Breast epithelium (tissue), 4 donors: ENCODE measurements at regions of chr7 and their contacts with region 1.

Region 1: DNA sequence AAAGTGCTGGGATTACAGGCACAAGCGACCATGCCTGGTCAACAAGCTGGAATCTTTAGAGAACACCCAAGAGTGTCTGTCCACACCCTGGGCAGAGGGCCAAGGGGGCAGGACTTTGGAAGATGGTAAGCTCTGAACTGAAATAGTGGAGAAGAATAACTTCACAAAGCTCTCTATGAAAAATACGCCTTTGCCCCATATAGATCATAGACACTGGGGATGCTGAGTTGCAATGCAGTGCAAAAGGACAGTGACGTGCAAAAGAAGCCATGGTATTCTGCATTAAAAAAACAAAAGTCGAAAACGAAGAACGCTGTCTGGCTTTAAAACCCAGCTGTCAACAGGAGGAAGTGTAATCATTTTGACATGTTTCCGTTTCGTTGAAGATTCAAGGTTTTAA is 353.6 kb downstream of the CALN1 start:
- DNase-seq: no peak
- H3K4me3 ChIP-seq: no peak overlapping the region
- H3K27ac ChIP-seq: no peak overlapping the region
- H3K4me1 ChIP-seq: no peaks in the 10 kb centered on the region
- H3K27me3 ChIP-seq: no peaks in the 10 kb centered on the region
- CTCF ChIP-seq: no peak
- POLR2A ChIP-seq: no peak

Region 2: GRCh38 chr7:72017756-72018155 is 40.8 kb before region 1 on chr7:
- intact Hi-C with region 1: no loop called
- DNase-seq: no peak
- H3K4me3 ChIP-seq: no peak overlapping the region
- H3K27ac ChIP-seq: no peak overlapping the region
- H3K4me1 ChIP-seq: no peaks in the 10 kb centered on the region
- H3K27me3 ChIP-seq: no peaks in the 10 kb centered on the region
- CTCF ChIP-seq: no peak
- POLR2A ChIP-seq: no peak

Region 3: GRCh38 chr7:72080341-72080766 is 21.8 kb after region 1 on chr7:
- intact Hi-C with region 1: loop called (anchors 1 kb)
- DNase-seq: no peak
- H3K4me3 ChIP-seq: no peak overlapping the region
- H3K27ac ChIP-seq: peak overlapping the region in 1 of 2 donors; percentile 25
- H3K4me1 ChIP-seq: no peaks in the 10 kb centered on the region
- H3K27me3 ChIP-seq: no peaks in the 10 kb centered on the region
- CTCF ChIP-seq: no peak
- POLR2A ChIP-seq: no peak

Region 4: DNA sequence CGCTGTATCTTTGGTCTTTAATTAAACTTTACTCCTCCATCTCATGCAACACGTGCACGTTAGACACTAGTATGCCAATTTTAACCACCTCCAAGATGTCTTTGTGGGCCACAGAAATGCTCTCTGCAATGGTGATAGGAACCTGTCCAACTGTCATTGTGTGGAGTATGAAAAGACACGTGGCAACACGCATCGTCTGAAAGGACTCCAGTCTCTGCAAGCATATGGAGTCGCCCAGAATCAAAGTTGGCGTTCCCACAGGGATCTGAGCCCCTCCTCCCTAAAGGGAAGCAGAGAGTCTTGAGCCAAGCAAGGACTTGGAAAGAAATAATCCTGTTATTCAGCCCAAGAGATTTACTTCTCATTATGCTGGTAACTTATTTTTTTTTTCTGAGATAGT is 52.5 kb after region 1 on chr7:
- intact Hi-C with region 1: no loop called
- DNase-seq: no peak
- H3K4me3 ChIP-seq: no peak overlapping the region
- H3K27ac ChIP-seq: no peak overlapping the region
- H3K4me1 ChIP-seq: no peaks in the 10 kb centered on the region
- H3K27me3 ChIP-seq: no peaks in the 10 kb centered on the region
- CTCF ChIP-seq: no peak
- POLR2A ChIP-seq: no peak